HepG2 (cell line): ENCODE measurements at regions of chr17 and their contacts with region 1.

Region 1: DNA sequence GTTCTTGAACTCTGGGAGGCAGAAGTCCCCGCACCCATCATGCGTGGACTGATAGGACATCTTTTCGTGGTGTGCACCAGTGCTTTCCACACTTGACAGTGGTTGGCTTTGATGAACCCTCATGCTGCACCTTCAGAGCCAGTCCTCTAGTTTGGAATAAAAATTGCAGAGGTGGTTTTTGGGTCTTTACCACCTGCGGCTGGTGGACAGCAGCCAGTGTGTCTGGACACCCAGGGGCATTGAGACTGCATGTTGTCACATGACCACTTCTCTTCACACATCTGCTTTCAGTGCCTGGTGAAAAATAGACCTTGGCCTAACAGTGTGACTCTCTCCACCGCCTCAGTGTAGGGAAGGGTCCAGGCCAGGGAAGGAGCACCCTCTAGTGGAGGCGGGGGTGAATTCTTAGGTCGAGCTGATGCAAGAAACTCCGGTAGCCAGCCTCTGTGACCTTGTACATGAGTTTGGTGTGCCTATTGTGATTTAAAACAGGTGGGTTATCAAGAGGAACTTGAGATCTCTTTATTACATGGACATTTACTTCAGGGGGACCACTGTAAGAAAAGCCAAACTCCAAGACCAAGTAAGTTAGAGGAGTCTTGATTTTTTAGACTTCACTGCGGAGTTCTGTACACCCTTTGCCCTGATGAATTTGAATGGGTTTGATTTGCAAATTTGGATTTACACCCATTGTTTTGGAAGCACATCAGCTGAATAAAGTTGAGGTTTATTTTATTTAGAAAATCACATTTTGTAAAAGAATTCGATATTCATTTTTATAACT is 17.9 kb downstream of the GOSR2 start:
- DNase-seq: peak; percentile 85
- ATAC-seq: peak; percentile 64
- H3K4me3 ChIP-seq: no peak overlapping the region
- H3K27ac ChIP-seq: no peak overlapping the region
- H3K4me1 ChIP-seq: peaks cover 40% of the 10 kb centered on the region
- H3K27me3 ChIP-seq: no peaks in the 10 kb centered on the region
- CTCF ChIP-seq: peak; percentile 99
- EP300 ChIP-seq: peak; percentile 23 to 57; a peak in 3 of 4 replicates
- POLR2A ChIP-seq: no peak
- RAD21 ChIP-seq: peak; percentile 92

Region 2: GRCh38 chr17:46841561-46842379 is 99.0 kb before region 1 on chr17:
- CTCF ChIA-PET with region 1: interaction called, 18 read pairs
- POLR2A ChIA-PET with region 1: no interaction called
- in situ Hi-C with region 1: no loop called
- intact Hi-C with region 1: loop called (anchors 2 kb)
- DNase-seq: no peak
- ATAC-seq: peak; percentile 92
- H3K4me3 ChIP-seq: peak overlapping the region in 2 of 3 experiments; percentile 12 to 68; a peak in 2 of 6 replicates
- H3K27ac ChIP-seq: no peak overlapping the region
- H3K4me1 ChIP-seq: peaks cover 22% of the 10 kb centered on the region
- H3K27me3 ChIP-seq: peaks cover 0 to 10% of the 10 kb centered on the region in 2 experiments; a peak in 3 of 5 replicates
- CTCF ChIP-seq: peak; percentile 95
- EP300 ChIP-seq: no peak
- POLR2A ChIP-seq: no peak
- RAD21 ChIP-seq: peak; percentile 97

Region 3: DNA sequence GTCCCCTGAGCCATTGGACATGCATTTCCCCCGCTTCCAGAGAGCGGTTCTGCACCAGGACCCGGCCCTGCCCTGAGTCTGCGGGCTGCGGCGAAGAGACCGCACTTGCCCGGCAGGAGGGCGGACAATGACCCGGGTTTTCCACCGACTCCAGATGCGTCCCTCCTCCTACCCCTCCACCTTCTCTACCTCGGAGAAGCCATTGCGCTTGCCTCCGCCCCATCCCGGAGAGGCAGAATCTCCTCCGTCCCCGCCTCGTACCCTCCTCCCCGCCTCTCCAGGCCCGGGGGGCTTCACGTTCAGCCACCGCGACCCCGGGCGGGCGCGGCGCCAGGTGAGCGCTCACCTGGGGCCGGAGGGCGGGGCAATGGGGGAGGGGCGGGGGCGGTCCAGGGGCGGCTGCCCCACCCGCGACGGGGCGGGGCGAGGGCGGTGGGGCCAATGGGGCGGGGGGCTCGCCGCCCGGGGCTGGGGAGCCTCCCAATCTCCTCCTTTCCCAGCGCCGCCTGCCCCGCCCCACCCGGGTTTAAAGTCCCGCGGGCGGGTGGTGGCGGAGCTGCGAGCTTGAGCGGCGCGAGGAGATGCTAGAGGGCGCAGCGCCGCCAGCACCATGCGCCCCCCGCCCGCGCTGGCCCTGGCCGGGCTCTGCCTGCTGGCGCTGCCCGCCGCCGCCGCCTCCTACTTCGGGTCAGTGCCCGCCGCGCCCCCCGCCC is 89.6 kb before region 1 on chr17 and contains the start of gene WNT9B:
- CTCF ChIA-PET with region 1: no interaction called
- POLR2A ChIA-PET with region 1: no interaction called
- in situ Hi-C with region 1: loop called (anchors 5 kb)
- intact Hi-C with region 1: no loop called
- DNase-seq: peak; percentile 48
- ATAC-seq: peak; percentile 79
- H3K4me3 ChIP-seq: peak within 1 kb of the TSS; percentile 52 to 76 (median 59)
- H3K27ac ChIP-seq: no peak within 1 kb of the TSS
- H3K4me1 ChIP-seq: peaks cover 40% of the 10 kb centered on the region
- H3K27me3 ChIP-seq: peaks cover 2 to 36% of the 10 kb centered on the region in 2 experiments; a peak in 3 of 5 replicates
- CTCF ChIP-seq: peak; percentile 63
- EP300 ChIP-seq: no peak
- POLR2A ChIP-seq: no peak
- RAD21 ChIP-seq: peak; percentile 29; the same call in 1 of the 2 replicates
- total RNA-seq, gene WNT9B: not detected in 2 replicates

Region 4: DNA sequence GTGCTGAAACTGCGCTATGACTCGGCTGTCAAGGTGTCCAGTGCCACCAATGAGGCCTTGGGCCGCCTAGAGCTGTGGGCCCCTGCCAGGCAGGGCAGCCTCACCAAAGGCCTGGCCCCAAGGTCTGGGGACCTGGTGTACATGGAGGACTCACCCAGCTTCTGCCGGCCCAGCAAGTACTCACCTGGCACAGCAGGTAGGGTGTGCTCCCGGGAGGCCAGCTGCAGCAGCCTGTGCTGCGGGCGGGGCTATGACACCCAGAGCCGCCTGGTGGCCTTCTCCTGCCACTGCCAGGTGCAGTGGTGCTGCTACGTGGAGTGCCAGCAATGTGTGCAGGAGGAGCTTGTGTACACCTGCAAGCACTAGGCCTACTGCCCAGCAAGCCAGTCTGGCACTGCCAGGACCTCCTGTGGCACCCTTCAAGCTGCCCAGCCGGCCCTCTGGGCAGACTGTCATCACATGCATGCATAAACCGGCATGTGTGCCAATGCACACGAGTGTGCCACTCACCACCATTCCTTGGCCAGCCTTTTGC is 64.4 kb before region 1 on chr17:
- CTCF ChIA-PET with region 1: no interaction called
- POLR2A ChIA-PET with region 1: no interaction called
- in situ Hi-C with region 1: loop called (anchors 10 kb)
- intact Hi-C with region 1: loop called (anchors 2 kb)
- DNase-seq: peak; percentile 53
- ATAC-seq: peak; percentile 93
- H3K4me3 ChIP-seq: no peak overlapping the region
- H3K27ac ChIP-seq: no peak overlapping the region
- H3K4me1 ChIP-seq: peaks cover 36% of the 10 kb centered on the region
- H3K27me3 ChIP-seq: peaks cover 7 to 53% of the 10 kb centered on the region in 2 experiments
- CTCF ChIP-seq: peak; percentile 95
- EP300 ChIP-seq: no peak
- POLR2A ChIP-seq: no peak
- RAD21 ChIP-seq: peak; percentile 92

Region 5: DNA sequence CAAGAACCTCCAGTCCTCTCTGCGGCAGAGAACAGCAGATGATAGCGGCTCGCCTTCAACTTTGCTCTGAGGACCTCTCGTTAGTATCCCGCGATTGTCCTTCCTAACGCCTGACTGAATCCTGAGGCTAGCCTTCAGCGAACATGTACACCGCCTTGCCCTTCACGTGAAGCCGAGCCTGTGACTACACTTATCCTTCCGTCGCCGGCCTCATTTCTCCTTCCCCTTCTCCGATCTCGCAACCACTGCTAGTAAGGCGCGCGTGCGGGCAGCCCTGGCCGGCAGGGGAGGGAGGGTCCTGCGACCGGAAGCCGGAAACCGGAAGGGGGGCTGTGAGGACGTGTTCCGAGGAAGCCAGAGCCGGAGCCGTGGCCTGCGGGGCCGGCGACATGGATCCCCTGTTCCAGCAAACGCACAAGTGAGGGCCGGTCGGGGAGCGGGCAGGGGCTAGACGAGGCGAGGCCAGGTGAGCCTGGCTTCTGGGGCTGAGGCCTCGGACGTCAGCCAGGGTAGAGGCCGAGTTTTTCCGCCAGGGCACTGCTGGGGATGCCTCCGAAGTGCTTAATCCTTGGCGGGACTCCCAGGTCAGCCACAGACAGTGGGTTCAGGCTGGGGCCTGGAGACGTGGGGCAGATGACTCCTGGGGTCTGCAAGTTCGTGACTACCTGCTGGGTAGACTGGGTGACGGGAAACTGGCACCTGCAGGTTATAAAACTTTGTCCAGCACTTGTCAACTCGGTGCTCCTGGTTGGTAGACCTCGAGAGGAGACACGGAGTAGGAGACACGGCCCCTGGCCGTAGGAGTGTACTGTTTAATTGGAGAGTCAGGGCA is 17.8 kb before region 1 on chr17 and contains the start of gene GOSR2:
- CTCF ChIA-PET with region 1: no interaction called
- POLR2A ChIA-PET with region 1: no interaction called
- in situ Hi-C with region 1: no loop called
- intact Hi-C with region 1: loop called (anchors 2 kb)
- DNase-seq: peak; percentile 89
- ATAC-seq: peak; percentile 98
- H3K4me3 ChIP-seq: peak within 1 kb of the TSS; percentile 87 to 97 (median 92)
- H3K27ac ChIP-seq: peak within 1 kb of the TSS; percentile 88
- H3K4me1 ChIP-seq: peaks cover 41% of the 10 kb centered on the region
- H3K27me3 ChIP-seq: no peaks in the 10 kb centered on the region; a peak in 1 of 5 replicates
- CTCF ChIP-seq: no peak; the same call in 1 of the 2 replicates
- EP300 ChIP-seq: peak; percentile 35 to 44; a peak in 1 of 4 replicates
- POLR2A ChIP-seq: peak; percentile 93 to 98
- RAD21 ChIP-seq: peak; percentile 57
- total RNA-seq, gene GOSR2: 63.9 and 69.8 TPM in 2 replicates

Region 6: GRCh38 chr17:46995841-46996571 is 55.2 kb after region 1 on chr17:
- CTCF ChIA-PET with region 1: interaction called, 33 read pairs
- POLR2A ChIA-PET with region 1: interaction called, 4 read pairs
- in situ Hi-C with region 1: loop called (anchors 5 kb)
- intact Hi-C with region 1: loop called (anchors 1 kb)
- DNase-seq: no peak
- ATAC-seq: no peak; the same call in 2 of the 3 replicates
- H3K4me3 ChIP-seq: no peak overlapping the region
- H3K27ac ChIP-seq: no peak overlapping the region
- H3K4me1 ChIP-seq: no peaks in the 10 kb centered on the region
- H3K27me3 ChIP-seq: peaks cover 4 to 7% of the 10 kb centered on the region in 2 experiments; a peak in 2 of 5 replicates
- CTCF ChIP-seq: no peak
- EP300 ChIP-seq: no peak
- POLR2A ChIP-seq: no peak
- RAD21 ChIP-seq: no peak

Region 7: DNA sequence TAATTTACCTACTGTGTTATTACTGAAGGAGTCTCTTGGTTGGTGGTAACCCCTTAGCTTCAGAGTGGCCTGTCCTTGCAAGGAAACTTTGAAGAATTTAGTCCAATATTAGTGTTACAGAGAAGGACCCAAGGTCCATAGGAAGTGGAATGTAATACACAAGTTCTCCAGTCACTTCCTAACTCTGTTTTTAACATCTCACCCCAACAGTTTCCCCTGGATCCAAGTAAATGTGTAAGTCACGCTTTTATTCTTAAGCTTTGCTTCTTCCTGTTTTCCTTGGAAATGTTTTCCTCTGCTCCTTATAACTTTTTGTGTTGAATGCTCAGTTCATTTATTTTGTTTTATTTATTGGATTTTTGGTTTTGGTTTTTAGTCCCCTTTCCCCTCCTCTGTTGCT is 64.1 kb after region 1 on chr17:
- CTCF ChIA-PET with region 1: interaction called, 33 read pairs
- POLR2A ChIA-PET with region 1: interaction called, 4 read pairs
- in situ Hi-C with region 1: loop called (anchors 5 kb)
- intact Hi-C with region 1: loop called (anchors 1 kb)
- DNase-seq: no peak
- ATAC-seq: no peak
- H3K4me3 ChIP-seq: no peak overlapping the region
- H3K27ac ChIP-seq: no peak overlapping the region
- H3K4me1 ChIP-seq: peaks cover 8% of the 10 kb centered on the region
- H3K27me3 ChIP-seq: no peaks in the 10 kb centered on the region
- CTCF ChIP-seq: no peak
- EP300 ChIP-seq: no peak
- POLR2A ChIP-seq: no peak
- RAD21 ChIP-seq: no peak

Region 8: GRCh38 chr17:47072886-47073285 is 132.1 kb after region 1 on chr17:
- CTCF ChIA-PET with region 1: no interaction called
- POLR2A ChIA-PET with region 1: no interaction called
- in situ Hi-C with region 1: no loop called
- intact Hi-C with region 1: no loop called
- DNase-seq: no peak
- ATAC-seq: no peak
- H3K4me3 ChIP-seq: no peak overlapping the region
- H3K27ac ChIP-seq: no peak overlapping the region
- H3K4me1 ChIP-seq: no peaks in the 10 kb centered on the region
- H3K27me3 ChIP-seq: no peaks in the 10 kb centered on the region
- CTCF ChIP-seq: no peak
- EP300 ChIP-seq: no peak
- POLR2A ChIP-seq: no peak
- RAD21 ChIP-seq: no peak